Aorta (tissue), 5 donors: ENCODE measurements at regions of chr11 and their contacts with region 1.

Region 1: DNA sequence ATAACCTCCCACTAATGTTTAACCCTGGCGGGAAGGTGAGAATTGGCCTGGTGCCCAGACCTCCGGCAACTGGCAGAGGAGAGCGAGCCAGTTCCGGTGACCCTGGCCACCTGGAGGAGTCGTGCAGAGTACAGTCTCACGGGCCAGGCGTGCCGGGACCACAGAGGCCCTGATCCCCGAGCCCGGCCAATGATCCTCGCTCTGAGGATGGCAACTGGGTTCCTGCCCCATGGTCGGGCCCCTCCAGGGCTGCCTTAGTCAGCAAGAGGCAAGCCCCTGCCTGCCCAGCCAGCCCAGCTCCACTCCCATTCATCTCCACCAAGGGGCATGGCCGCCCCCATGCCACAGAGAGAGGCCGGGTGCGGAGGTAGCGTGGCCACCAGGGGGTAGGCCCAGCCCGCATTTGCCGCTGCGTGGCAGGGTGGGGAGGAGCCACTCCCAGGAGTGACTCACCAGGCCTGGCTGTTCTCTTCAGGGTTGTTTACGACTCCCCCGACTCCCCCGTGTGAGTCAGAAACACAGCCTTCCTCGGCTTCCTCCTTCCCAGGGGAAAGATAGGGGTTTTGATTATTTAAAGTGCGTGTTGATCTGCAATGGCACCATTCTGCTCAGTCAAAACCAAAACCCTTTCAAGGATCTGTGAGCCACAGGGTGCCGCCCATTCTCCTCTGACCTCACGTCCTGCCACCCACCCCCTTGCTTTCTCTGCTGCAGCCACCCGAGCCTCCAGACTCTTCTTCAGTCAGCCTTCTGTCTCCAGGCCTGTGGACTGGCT is at the start of gene SLC25A45:
- DNase-seq: peak; percentile 95 to 97
- ATAC-seq: peak; percentile 95
- H3K4me3 ChIP-seq: no peak within 1 kb of the TSS
- H3K27ac ChIP-seq: peak within 1 kb of the TSS; percentile 83 to 87
- H3K4me1 ChIP-seq: no peaks in the 10 kb centered on the region
- H3K27me3 ChIP-seq: no peaks in the 10 kb centered on the region
- total RNA-seq, gene SLC25A45: 9.1 to 16.0 TPM

Region 2: GRCh38 chr11:65429724-65430405 is 47.6 kb after region 1 on chr11:
- intact Hi-C with region 1: no loop called
- DNase-seq: peak; percentile 88 to 91
- ATAC-seq: peak; percentile 37
- H3K4me3 ChIP-seq: peak overlapping the region; percentile 29 to 53
- H3K27ac ChIP-seq: peak overlapping the region; percentile 39 to 74
- H3K4me1 ChIP-seq: no peaks in the 10 kb centered on the region
- H3K27me3 ChIP-seq: no peaks in the 10 kb centered on the region

Region 3: DNA sequence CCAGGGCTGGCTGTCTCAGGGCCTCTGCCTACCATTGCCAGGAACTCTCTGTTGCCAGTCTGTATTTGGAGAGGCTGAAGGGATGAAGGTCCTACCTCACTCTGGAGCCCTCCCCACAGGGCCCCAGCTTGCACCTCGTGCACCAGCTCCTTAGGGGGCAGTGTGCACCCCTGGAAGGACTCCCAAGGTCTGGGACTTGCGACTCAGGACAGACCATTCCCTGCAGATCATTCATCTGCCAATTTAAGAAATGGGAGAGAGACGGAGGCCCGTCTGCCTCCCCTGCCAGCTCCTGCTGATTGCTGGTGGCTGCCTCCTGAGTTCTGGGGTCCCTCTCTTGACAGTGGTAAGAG is 89.2 kb after region 1 on chr11:
- intact Hi-C with region 1: loop called in 1 of 2 experiments (anchors 5 kb)
- DNase-seq: peak; percentile 84 to 91
- ATAC-seq: peak; percentile 91
- H3K4me3 ChIP-seq: no peak overlapping the region
- H3K27ac ChIP-seq: peak overlapping the region; percentile 97 to 98
- H3K4me1 ChIP-seq: no peaks in the 10 kb centered on the region
- H3K27me3 ChIP-seq: no peaks in the 10 kb centered on the region

Region 4: DNA sequence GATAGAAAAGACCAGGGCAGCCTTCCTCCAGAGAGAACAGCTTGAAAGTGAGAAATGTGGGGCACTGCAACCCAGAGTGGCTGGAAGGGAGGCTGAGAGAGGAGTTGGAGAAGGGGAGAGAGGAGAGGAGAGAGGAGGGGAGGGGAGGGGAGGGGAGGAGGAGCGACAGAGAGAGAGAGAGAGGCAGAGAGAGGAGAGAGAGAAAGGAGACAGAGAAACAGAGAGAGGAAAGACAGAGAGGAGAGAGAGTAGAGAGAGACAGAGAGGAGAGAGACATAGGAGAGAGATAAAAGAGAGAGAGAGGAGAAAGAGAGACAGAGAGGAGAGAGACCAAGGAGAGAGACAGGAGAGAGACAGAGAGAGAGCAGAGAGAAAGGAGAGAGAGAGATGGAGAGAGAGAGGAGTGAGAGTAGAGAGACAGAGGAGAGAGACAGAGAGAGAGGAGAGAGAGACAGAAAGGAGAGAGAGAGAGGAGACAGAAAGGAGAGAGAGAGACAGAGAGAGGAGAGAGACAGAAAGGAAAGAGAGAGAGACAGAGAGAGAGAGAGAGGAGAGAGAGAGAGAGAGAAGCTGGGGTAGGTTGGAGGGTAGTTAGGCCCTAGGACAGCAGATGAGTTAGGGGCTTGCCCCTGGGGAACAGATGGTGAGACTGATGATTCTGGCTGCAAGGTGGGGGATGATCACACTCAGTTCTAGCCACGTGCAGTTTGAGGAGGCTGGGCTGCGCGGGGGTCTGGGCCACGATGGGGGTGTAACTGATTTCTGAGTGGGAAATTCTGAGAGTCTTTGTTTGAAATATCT is 134.1 kb after region 1 on chr11:
- intact Hi-C with region 1: loop called in 1 of 2 experiments (anchors 5 kb)
- DNase-seq: peak; percentile 14 to 21
- ATAC-seq: no peak
- H3K4me3 ChIP-seq: no peak overlapping the region
- H3K27ac ChIP-seq: no peak overlapping the region
- H3K4me1 ChIP-seq: no peaks in the 10 kb centered on the region
- H3K27me3 ChIP-seq: no peaks in the 10 kb centered on the region